ENCODE measurements at regions of chr18 and their contacts with region 1.

Region 1: GRCh38 chr18:28108814-28109213 is 68.1 kb downstream of the CDH2 start:
- DNase-seq: no peak
- ATAC-seq: peak in 2 of 8 donors; percentile 25 to 34
- H3K4me3 ChIP-seq: no peak overlapping the region
- H3K27ac ChIP-seq: peak overlapping the region in 7 of 10 donors; percentile 15 to 88 (median 85)
- H3K4me1 ChIP-seq: peaks cover 0 to 65% (median 14%) of the 10 kb centered on the region in 9 donors
- H3K27me3 ChIP-seq: no peaks in the 10 kb centered on the region
- CTCF ChIP-seq: peak in 3 of 9 donors; percentile 25 to 33 (median 33)

Region 2: DNA sequence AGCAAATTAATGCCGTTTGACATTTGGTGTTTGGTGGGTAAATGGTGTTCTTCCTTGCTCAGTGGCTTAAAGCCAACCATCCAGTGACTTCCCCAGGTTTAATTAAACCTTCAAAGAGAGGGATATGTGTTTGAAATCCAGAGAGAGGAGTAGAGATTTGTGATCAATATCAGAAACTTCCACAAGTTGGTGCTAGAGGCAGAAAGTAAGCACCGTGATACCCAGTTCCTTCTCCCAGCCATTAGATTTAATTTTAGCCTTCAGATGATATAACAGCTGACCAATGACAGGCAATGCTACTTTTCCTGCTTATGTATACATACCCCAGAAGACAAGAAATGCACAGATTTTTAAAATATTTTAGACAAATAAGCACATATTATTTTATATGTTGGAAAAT is 330.4 kb before region 1 on chr18:
- intact Hi-C with region 1: loop called in 1 of 10 experiments (anchors 5 kb)
- DNase-seq: no peak
- ATAC-seq: peak in 6 of 8 donors; percentile 34 to 75 (median 57)
- H3K4me3 ChIP-seq: no peak overlapping the region
- H3K27ac ChIP-seq: no peak overlapping the region
- H3K4me1 ChIP-seq: no peaks in the 10 kb centered on the region
- H3K27me3 ChIP-seq: no peaks in the 10 kb centered on the region
- CTCF ChIP-seq: peak in 8 of 9 donors; percentile 23 to 63 (median 51)

Region 3: DNA sequence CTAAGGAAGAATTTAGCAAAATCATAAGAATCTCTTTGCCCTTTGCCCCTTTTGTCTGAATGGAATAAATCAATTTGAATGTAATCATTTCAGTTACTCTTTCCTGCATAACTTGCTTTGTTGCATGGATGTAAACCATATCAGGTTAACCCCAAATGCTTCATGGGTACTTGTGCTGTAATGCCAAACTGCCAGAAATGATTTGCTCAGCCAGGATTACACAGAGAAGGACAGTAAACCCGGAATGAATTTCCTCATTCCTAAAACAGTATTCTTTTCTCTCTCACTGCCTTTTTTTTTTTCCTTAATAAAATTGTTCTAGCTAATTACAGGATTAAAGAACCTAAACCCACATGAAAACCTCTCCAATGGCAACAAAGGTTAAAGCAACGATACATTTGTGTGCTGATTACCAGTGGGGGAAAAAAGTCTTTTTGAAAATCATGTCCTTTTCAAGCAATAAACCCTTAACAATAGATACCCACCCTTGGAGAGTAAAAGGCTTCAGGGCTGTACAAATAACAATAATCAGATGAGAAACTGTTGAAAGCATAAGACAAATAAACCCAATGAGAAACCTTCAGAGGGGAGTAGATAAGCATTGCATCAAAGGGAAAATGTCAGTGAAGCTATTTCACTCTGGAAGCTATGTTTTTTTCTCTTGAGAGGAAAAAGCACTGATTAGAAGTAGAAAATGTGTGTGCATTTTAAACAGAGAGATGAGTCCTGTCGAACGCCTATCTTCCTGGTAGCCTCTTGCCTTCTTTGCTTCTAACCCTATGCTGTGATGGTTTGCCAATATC is 207.2 kb before region 1 on chr18:
- intact Hi-C with region 1: no loop called
- DNase-seq: no peak
- ATAC-seq: no peak
- H3K4me3 ChIP-seq: no peak overlapping the region
- H3K27ac ChIP-seq: no peak overlapping the region
- H3K4me1 ChIP-seq: no peaks in the 10 kb centered on the region
- H3K27me3 ChIP-seq: no peaks in the 10 kb centered on the region
- CTCF ChIP-seq: no peak

Region 4: GRCh38 chr18:27931535-27931934 is 177.3 kb before region 1 on chr18:
- intact Hi-C with region 1: no loop called
- DNase-seq: no peak
- ATAC-seq: no peak
- H3K4me3 ChIP-seq: no peak overlapping the region
- H3K27ac ChIP-seq: no peak overlapping the region
- H3K4me1 ChIP-seq: no peaks in the 10 kb centered on the region
- H3K27me3 ChIP-seq: no peaks in the 10 kb centered on the region
- CTCF ChIP-seq: no peak

Region 5: GRCh38 chr18:28013066-28013465 is 95.7 kb before region 1 on chr18:
- intact Hi-C with region 1: loop called in 2 of 10 experiments (anchors 10 kb)
- DNase-seq: no peak
- ATAC-seq: no peak
- H3K4me3 ChIP-seq: no peak overlapping the region
- H3K27ac ChIP-seq: no peak overlapping the region
- H3K4me1 ChIP-seq: peaks cover 0 to 25% (median 0%) of the 10 kb centered on the region in 9 donors
- H3K27me3 ChIP-seq: no peaks in the 10 kb centered on the region
- CTCF ChIP-seq: peak in 7 of 9 donors; percentile 20 to 41 (median 36)

Measured in heart right ventricle (tissue), 16 donors.